Lower leg skin (tissue), 4 donors: ENCODE measurements at regions of chr2 and their contacts with region 1.

Region 1: DNA sequence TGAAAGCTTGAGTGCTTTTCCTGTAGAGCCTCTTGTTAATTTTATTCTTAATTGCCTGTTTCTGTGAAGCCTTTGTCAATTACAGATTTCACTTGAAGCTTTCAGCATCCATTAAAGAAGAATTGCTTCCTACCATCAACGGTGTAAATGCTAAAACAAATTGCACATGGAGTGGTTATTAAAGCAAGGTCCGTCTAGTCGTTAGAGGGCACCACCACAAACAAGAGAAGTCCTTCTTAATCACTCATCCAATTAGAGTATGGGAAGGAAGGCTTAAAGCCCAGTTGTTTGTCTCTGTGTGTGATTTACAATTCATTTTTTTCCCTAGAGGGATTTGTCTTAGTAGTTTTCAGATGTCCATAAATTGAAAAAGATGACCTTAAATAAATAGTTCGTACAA is 1.6 kb downstream of the KCNJ3 start:
- DNase-seq: no peak
- H3K4me3 ChIP-seq: no peak overlapping the region
- CTCF ChIP-seq: no peak
- POLR2A ChIP-seq: no peak

Region 2: DNA sequence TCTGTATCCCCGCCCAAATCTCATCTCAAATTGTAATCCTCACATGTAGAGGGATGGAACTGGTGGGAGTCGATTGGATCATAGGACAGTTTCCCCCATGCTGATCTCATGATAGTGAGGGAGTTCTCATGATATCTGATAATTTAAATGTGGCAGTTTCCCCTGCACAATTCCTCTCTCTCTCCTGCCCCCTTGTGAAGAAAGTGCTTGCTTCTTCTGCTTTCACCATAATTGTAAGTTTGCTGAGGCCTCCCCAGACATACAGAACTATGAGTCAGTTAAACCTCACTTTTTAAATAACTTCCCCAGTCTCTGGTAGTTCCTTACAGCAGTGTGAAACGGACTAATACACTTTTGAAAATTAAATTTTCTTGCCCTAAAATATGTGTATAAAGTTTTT is 14.0 kb before region 1 on chr2:
- intact Hi-C with region 1: no loop called
- DNase-seq: no peak
- H3K4me3 ChIP-seq: no peak overlapping the region
- CTCF ChIP-seq: no peak
- POLR2A ChIP-seq: no peak

Region 3: DNA sequence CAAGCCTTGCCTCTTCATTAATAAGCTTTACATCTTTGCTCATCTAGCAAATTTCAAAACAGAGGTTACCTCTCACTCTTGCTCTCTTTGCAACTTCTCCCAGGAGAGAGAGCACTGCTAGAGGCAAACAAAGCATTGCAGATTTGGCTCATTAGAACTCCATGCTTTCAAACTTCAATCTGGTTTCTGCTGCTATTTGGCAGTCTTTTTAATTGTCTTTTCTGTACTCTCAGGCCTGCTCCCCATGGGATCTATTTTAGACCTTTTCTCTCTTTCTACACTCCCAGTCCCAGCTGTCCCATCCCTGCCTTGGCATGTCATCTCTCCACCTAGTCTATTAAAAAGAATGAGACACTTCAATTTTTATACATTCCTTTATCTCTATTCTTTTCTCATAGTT is 13.5 kb after region 1 on chr2:
- intact Hi-C with region 1: no loop called
- DNase-seq: no peak
- H3K4me3 ChIP-seq: no peak overlapping the region
- CTCF ChIP-seq: no peak
- POLR2A ChIP-seq: no peak

Region 4: DNA sequence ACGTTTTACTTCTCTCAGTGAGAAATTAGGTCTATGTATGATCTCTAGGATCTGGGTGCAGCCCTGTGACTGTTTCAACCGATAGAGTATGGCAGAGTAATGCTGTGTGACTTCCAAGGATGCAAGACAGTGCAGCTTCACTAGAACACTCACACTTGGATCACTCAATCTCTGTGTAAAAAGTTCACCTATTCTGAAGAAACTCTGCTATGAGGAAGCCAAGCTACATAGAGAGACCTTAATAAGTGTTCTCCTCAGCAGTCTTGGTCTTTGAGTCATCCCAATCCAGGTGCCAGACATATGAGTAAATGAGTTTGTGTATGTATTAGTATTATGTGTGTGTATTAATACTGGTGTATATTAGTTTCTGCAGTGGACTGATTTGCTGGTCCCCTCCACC is 1297.4 kb after region 1 on chr2:
- intact Hi-C with region 1: loop called (anchors 5 kb)
- DNase-seq: no peak
- H3K4me3 ChIP-seq: no peak overlapping the region
- CTCF ChIP-seq: no peak
- POLR2A ChIP-seq: no peak